BJ (cell line): ENCODE measurements at regions of chr13 and their contacts with region 1.

Region 1: GRCh38 chr13:76903544-76904162 is 17.4 kb upstream of the KCTD12 start:
- DNase-seq: no peak
- H3K4me3 ChIP-seq: no peak overlapping the region
- H3K27me3 ChIP-seq: peaks cover 10% of the 10 kb centered on the region
- CTCF ChIP-seq: peak; percentile 98

Region 2: DNA sequence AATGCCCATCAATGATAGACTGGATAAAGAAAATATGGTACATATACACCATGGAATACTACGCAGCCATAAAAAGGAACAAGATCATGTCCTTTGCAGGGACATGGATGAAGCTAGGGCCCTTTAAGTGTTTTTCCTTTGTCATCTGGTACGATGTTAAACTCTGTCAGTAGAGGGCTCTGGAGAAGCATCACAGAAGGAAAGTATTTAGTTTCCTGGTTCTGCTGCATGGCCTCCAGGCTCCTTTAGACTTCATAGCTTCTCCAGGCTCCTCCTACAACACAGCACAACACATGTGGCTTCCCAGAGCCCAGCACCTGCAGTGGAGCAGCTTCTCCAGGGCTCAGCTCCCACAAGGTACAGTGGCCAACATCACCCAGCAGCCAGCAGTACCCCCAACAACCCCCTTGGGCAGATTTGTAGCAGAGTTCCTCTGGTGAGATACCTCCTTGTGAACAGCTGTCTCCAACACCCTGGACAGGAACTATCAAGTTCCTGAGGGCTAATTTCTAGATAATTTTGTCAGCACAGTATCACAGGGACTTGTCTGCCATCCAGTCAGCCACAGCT is 80.9 kb before region 1 on chr13:
- CTCF ChIA-PET with region 1: interaction called, 52 read pairs
- POLR2A ChIA-PET with region 1: no interaction called
- DNase-seq: no peak
- H3K4me3 ChIP-seq: no peak overlapping the region
- H3K27me3 ChIP-seq: no peaks in the 10 kb centered on the region; the same call in 1 of the 2 replicates
- CTCF ChIP-seq: peak; percentile 39